ENCODE measurements at regions of chr13 and their contacts with region 1.

Region 1: GRCh38 chr13:37058910-37059847 is at the start of gene SUPT20H:
- DNase-seq: peak; percentile 47
- ATAC-seq: peak; percentile 99
- H3K4me3 ChIP-seq: peak within 1 kb of the TSS; percentile 78
- H3K27ac ChIP-seq: peak within 1 kb of the TSS; percentile 88
- H3K4me1 ChIP-seq: peaks cover 2% of the 10 kb centered on the region; the same call in 1 of the 2 replicates
- H3K27me3 ChIP-seq: no peaks in the 10 kb centered on the region; a peak in 1 of 4 replicates
- CTCF ChIP-seq: no peak
- EP300 ChIP-seq: no peak
- POLR2A ChIP-seq: peak; percentile 97
- RAD21 ChIP-seq: no peak
- polyA plus RNA-seq, gene SUPT20H: 12.3 to 13.9 TPM

Region 2: GRCh38 chr13:35923347-35923746 is 1135.8 kb before region 1 on chr13:
- CTCF ChIA-PET with region 1: no interaction called
- POLR2A ChIA-PET with region 1: no interaction called
- RAD21 ChIA-PET with region 1: no interaction called
- SMC1A ChIA-PET with region 1: no interaction called
- in situ Hi-C with region 1: no loop called
- intact Hi-C with region 1: no loop called
- DNase-seq: no peak
- ATAC-seq: no peak
- H3K4me3 ChIP-seq: no peak overlapping the region
- H3K27ac ChIP-seq: no peak overlapping the region
- H3K4me1 ChIP-seq: no peaks in the 10 kb centered on the region
- H3K27me3 ChIP-seq: no peaks in the 10 kb centered on the region
- CTCF ChIP-seq: no peak
- EP300 ChIP-seq: no peak
- POLR2A ChIP-seq: no peak
- RAD21 ChIP-seq: no peak

Region 3: DNA sequence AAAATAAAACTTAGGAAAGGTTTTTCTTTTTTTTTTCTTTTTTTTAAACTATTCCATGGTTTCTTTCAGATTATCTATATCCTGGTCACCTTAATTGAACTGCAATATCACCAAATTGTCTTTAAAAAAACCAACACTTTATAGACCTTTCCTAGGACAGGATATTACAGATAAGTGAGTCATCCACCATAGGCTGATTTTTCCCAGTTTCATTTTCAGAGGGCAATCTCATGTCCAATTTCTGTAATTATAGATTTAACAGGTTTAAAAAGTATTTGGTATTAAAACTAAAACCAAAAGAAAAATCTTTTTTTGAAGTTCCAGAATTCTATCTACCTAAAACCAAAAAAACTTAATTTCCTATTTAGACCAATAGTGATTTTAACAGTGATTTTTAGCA is 726.2 kb before region 1 on chr13:
- CTCF ChIA-PET with region 1: no interaction called
- POLR2A ChIA-PET with region 1: no interaction called
- RAD21 ChIA-PET with region 1: no interaction called
- SMC1A ChIA-PET with region 1: no interaction called
- in situ Hi-C with region 1: no loop called
- intact Hi-C with region 1: loop called (anchors 5 kb)
- DNase-seq: no peak
- ATAC-seq: no peak
- H3K4me3 ChIP-seq: no peak overlapping the region
- H3K27ac ChIP-seq: no peak overlapping the region
- H3K4me1 ChIP-seq: no peaks in the 10 kb centered on the region
- H3K27me3 ChIP-seq: no peaks in the 10 kb centered on the region
- CTCF ChIP-seq: no peak
- EP300 ChIP-seq: no peak
- POLR2A ChIP-seq: no peak
- RAD21 ChIP-seq: no peak

Region 4: DNA sequence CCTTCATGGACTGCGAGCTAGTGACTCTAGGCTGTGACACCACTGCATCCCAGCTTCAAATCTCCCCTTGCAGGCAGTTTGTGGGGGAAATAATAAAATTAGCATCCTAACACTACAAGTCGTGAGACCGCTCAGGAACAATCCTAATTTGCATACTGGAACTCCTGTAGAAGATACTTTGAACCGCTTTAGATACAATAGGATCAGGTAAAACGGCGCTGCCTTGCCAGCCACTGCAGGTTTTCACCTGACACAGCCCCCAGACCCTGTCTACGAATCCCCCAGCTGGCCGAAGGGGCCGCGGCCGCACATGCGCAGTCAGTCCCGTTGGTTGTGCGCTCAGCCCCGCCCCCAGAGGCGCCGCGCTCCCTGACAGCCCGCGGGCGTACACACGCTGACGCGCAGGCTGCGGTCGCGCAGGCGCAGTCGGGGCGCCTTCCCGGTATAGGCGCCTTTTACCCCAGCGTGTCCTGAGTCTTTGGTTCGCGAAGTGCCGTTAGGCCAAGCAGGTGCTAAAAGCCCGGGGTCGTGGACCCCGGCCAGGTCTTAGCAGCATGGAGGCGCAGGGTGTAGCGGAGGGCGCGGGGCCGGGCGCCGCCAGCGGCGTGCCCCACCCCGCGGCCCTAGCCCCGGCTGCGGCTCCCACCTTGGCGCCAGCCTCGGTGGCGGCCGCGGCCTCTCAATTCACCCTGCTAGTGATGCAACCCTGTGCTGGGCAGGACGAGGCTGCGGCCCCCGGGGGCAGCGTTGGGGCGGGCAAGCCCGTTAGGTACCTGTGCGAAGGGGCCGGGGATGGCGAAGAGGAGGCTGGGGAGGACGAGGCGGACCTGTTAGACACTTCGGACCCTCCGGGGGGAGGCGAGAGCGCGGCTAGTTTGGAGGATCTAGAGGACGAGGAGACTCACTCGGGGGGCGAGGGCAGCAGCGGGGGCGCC is 240.1 kb before region 1 on chr13 and contains the start of gene RFXAP:
- CTCF ChIA-PET with region 1: no interaction called
- POLR2A ChIA-PET with region 1: no interaction called
- RAD21 ChIA-PET with region 1: no interaction called
- SMC1A ChIA-PET with region 1: no interaction called
- in situ Hi-C with region 1: loop called (anchors 5 kb)
- intact Hi-C with region 1: loop called (anchors 5 kb)
- DNase-seq: peak; percentile 51
- ATAC-seq: peak; percentile 87
- H3K4me3 ChIP-seq: peak within 1 kb of the TSS; percentile 64
- H3K27ac ChIP-seq: peak within 1 kb of the TSS; percentile 54
- H3K4me1 ChIP-seq: no peaks in the 10 kb centered on the region; the same call in 1 of the 2 replicates
- H3K27me3 ChIP-seq: peaks cover 0 to 3% of the 10 kb centered on the region in 2 experiments; a peak in 2 of 4 replicates
- CTCF ChIP-seq: 0 out of 6 replicates have a peak, but pooled peaks of 2 of the 3 experiments have one; percentile 2 to 20
- EP300 ChIP-seq: no peak
- POLR2A ChIP-seq: peak; percentile 75
- RAD21 ChIP-seq: no peak
- polyA plus RNA-seq, gene RFXAP: 3.4 to 6.7 TPM

Region 5: DNA sequence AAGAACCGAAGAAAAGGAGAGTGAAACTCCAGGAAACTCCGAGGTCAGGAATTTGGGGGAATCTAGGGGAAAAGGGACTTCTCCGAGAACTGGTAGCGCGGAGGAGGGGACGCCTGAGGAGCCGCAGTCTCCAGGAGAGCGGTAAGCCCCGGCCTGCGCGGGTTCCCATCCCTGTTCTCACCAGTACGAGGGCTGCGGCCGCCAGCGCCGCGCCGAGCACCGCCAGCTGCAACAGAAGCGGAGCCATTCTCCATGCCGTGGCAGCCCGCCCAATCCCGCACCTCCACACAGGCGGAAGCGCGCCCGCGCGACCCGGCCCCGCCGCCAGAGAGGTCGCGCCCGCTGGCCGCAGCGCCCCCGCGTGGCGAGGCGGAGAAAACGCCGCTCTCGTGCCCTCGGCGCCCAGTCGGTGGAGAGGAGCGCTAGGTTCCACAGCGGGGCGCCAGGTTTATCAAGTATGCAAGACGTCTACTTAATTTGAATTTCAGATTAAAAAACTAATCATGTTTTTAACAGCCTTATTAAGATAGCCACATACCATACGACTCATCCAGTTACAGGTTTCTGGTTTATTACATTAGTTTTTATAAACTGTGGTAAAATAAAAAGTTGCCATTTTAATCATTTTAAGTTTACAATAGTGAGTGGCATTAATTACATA is 60.0 kb before region 1 on chr13 and contains the start of gene ALG5:
- CTCF ChIA-PET with region 1: no interaction called
- POLR2A ChIA-PET with region 1: interaction called, 3 read pairs
- RAD21 ChIA-PET with region 1: no interaction called
- SMC1A ChIA-PET with region 1: no interaction called
- in situ Hi-C with region 1: no loop called
- intact Hi-C with region 1: loop called (anchors 2 kb)
- DNase-seq: peak; percentile 44
- ATAC-seq: peak; percentile 78
- H3K4me3 ChIP-seq: peak within 1 kb of the TSS; percentile 100
- H3K27ac ChIP-seq: peak within 1 kb of the TSS; percentile 92
- H3K4me1 ChIP-seq: peaks cover 4% of the 10 kb centered on the region; the same call in 1 of the 2 replicates
- H3K27me3 ChIP-seq: no peaks in the 10 kb centered on the region
- CTCF ChIP-seq: peak; percentile 72 to 99 (median 97); a peak in 5 of 6 replicates
- EP300 ChIP-seq: 0 out of 4 replicates have a peak, but pooled peaks of 1 of the 2 experiments have one; percentile 10
- POLR2A ChIP-seq: peak; percentile 95
- RAD21 ChIP-seq: no peak
- polyA plus RNA-seq, gene ALG5: 61.6 to 79.9 TPM

Region 6: GRCh38 chr13:37369616-37370015 is 310.4 kb after region 1 on chr13:
- CTCF ChIA-PET with region 1: no interaction called
- POLR2A ChIA-PET with region 1: no interaction called
- RAD21 ChIA-PET with region 1: no interaction called
- SMC1A ChIA-PET with region 1: no interaction called
- in situ Hi-C with region 1: no loop called
- intact Hi-C with region 1: no loop called
- DNase-seq: no peak
- ATAC-seq: no peak
- H3K4me3 ChIP-seq: no peak overlapping the region
- H3K27ac ChIP-seq: no peak overlapping the region
- H3K4me1 ChIP-seq: no peaks in the 10 kb centered on the region
- H3K27me3 ChIP-seq: no peaks in the 10 kb centered on the region
- CTCF ChIP-seq: no peak
- EP300 ChIP-seq: no peak
- POLR2A ChIP-seq: no peak
- RAD21 ChIP-seq: no peak

Region 7: GRCh38 chr13:38349390-38350113 is 1290.4 kb after region 1 on chr13 and contains the start of gene UFM1:
- CTCF ChIA-PET with region 1: no interaction called
- POLR2A ChIA-PET with region 1: no interaction called
- RAD21 ChIA-PET with region 1: no interaction called
- SMC1A ChIA-PET with region 1: no interaction called
- in situ Hi-C with region 1: loop called (anchors 25 kb)
- intact Hi-C with region 1: no loop called
- DNase-seq: peak; percentile 86
- ATAC-seq: peak; percentile 96
- H3K4me3 ChIP-seq: peak within 1 kb of the TSS; percentile 89
- H3K27ac ChIP-seq: peak within 1 kb of the TSS; percentile 95
- H3K4me1 ChIP-seq: peaks cover 7% of the 10 kb centered on the region; the same call in 1 of the 2 replicates
- H3K27me3 ChIP-seq: no peaks in the 10 kb centered on the region
- CTCF ChIP-seq: no peak
- EP300 ChIP-seq: no peak
- POLR2A ChIP-seq: peak; percentile 97
- RAD21 ChIP-seq: no peak
- polyA plus RNA-seq, gene UFM1: 91.9 to 96.5 TPM